ENCODE measurements at regions of chr3 and their contacts with region 1.

Region 1: GRCh38 chr3:151168269-151169094 is 34.5 kb downstream of the GPR171 start:
- DNase-seq: peak; percentile 69 to 75 (median 72)
- H3K4me3 ChIP-seq: no peak overlapping the region
- H3K4me3 Mint-ChIP-seq: no peak overlapping the region
- H3K27ac ChIP-seq: no peak overlapping the region
- H3K27ac Mint-ChIP-seq: peak overlapping the region in 3 of 7 donors; percentile 2 to 76 (median 43)
- H3K4me1 ChIP-seq: peaks cover 34% of the 10 kb centered on the region
- H3K4me1 Mint-ChIP-seq: peaks cover 26 to 39% (median 33%) of the 10 kb centered on the region in 4 donors
- H3K27me3 ChIP-seq: no peaks in the 10 kb centered on the region
- H3K27me3 Mint-ChIP-seq: no peaks in the 10 kb centered on the region

Region 2: GRCh38 chr3:151156618-151157216 is 11.8 kb before region 1 on chr3:
- CTCF ChIA-PET with region 1: interaction called, 20 read pairs
- POLR2A ChIA-PET with region 1: no interaction called
- intact Hi-C with region 1: no loop called
- DNase-seq: peak; percentile 42 to 49 (median 45)
- H3K4me3 ChIP-seq: no peak overlapping the region
- H3K4me3 Mint-ChIP-seq: no peak overlapping the region
- H3K27ac ChIP-seq: no peak overlapping the region
- H3K27ac Mint-ChIP-seq: no peak overlapping the region
- H3K4me1 ChIP-seq: no peaks in the 10 kb centered on the region
- H3K4me1 Mint-ChIP-seq: peaks cover 0 to 2% (median 0%) of the 10 kb centered on the region in 4 donors
- H3K27me3 ChIP-seq: no peaks in the 10 kb centered on the region
- H3K27me3 Mint-ChIP-seq: peaks cover 8% of the 10 kb centered on the region in 2 donors

Region 3: DNA sequence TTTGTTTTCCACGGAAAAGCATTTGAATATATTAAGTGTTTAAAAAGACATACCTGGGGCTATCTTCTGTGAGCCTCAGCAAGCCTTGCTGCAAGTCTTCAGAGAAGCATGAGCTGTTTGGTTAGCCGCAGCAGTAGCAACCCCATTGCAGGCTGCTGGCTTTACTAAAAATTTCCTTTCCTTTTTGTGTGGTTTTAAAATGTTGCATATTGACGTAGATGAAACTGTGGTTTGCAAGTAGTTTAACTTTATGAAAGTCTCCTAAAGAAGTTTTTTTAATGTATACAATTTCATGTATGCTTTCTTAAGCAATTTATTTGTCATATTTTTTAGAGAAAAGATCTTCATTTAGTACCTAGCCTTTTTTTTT is 34.6 kb after region 1 on chr3 and contains the start of gene GPR171:
- CTCF ChIA-PET with region 1: interaction called, 39 read pairs
- POLR2A ChIA-PET with region 1: interaction called, 70 read pairs
- intact Hi-C with region 1: loop called (anchors 1 kb)
- DNase-seq: peak; percentile 80 to 87 (median 82)
- H3K4me3 ChIP-seq: peak within 1 kb of the TSS; percentile 59 to 63
- H3K4me3 Mint-ChIP-seq: peak within 1 kb of the TSS; percentile 73 to 89 (median 86)
- H3K27ac ChIP-seq: peak within 1 kb of the TSS; percentile 75
- H3K27ac Mint-ChIP-seq: peak within 1 kb of the TSS; percentile 87 to 98 (median 97)
- H3K4me1 ChIP-seq: peaks cover 83% of the 10 kb centered on the region
- H3K4me1 Mint-ChIP-seq: peaks cover 45 to 94% (median 59%) of the 10 kb centered on the region in 4 donors
- H3K27me3 ChIP-seq: no peaks in the 10 kb centered on the region
- H3K27me3 Mint-ChIP-seq: no peaks in the 10 kb centered on the region
- total RNA-seq, gene GPR171: 116 to 129 TPM

Region 4: GRCh38 chr3:151227807-151228665 is 59.6 kb after region 1 on chr3:
- CTCF ChIA-PET with region 1: interaction called, 112 read pairs
- POLR2A ChIA-PET with region 1: no interaction called
- intact Hi-C with region 1: loop called (anchors 1 kb)
- DNase-seq: peak; percentile 74 to 78 (median 76)
- H3K4me3 ChIP-seq: no peak overlapping the region
- H3K4me3 Mint-ChIP-seq: peak overlapping the region in 3 of 8 donors; percentile 6 to 63 (median 41)
- H3K27ac ChIP-seq: no peak overlapping the region
- H3K27ac Mint-ChIP-seq: peak overlapping the region in 6 of 7 donors; percentile 2 to 70 (median 49)
- H3K4me1 ChIP-seq: peaks cover 23% of the 10 kb centered on the region
- H3K4me1 Mint-ChIP-seq: peaks cover 26 to 51% (median 35%) of the 10 kb centered on the region in 4 donors
- H3K27me3 ChIP-seq: no peaks in the 10 kb centered on the region
- H3K27me3 Mint-ChIP-seq: no peaks in the 10 kb centered on the region

Region 5: DNA sequence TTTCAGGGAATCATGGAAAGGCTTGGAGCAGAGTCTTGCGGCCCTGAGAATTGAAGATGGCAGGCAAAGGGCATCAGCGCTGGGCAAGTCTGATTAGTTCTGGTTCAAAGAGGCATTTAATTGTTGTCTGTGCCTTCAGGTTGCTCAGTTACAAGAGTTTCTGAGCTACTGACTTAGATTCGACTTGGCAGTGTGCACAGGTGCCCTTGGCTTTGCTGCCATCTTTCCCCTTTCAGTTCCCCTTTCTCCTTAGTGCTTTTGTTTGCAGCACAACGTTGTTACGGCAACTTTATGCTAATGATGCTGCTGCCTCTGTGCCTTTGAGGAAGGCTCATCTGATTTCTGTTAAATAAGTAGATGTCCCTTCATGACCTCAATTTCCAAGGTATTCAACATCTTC is 97.4 kb after region 1 on chr3:
- CTCF ChIA-PET with region 1: interaction called, 19 read pairs
- POLR2A ChIA-PET with region 1: no interaction called
- intact Hi-C with region 1: no loop called
- DNase-seq: no peak
- H3K4me3 ChIP-seq: no peak overlapping the region
- H3K4me3 Mint-ChIP-seq: no peak overlapping the region
- H3K27ac ChIP-seq: no peak overlapping the region
- H3K27ac Mint-ChIP-seq: no peak overlapping the region
- H3K4me1 ChIP-seq: peaks cover 10% of the 10 kb centered on the region
- H3K4me1 Mint-ChIP-seq: peaks cover 10 to 25% (median 13%) of the 10 kb centered on the region in 4 donors
- H3K27me3 ChIP-seq: no peaks in the 10 kb centered on the region
- H3K27me3 Mint-ChIP-seq: peaks cover 0 to 1% of the 10 kb centered on the region in 2 donors

Region 6: GRCh38 chr3:151290673-151291072 is 122.2 kb after region 1 on chr3:
- CTCF ChIA-PET with region 1: interaction called, 88 read pairs
- POLR2A ChIA-PET with region 1: no interaction called
- intact Hi-C with region 1: no loop called
- DNase-seq: no peak
- H3K4me3 ChIP-seq: no peak overlapping the region
- H3K4me3 Mint-ChIP-seq: no peak overlapping the region
- H3K27ac ChIP-seq: no peak overlapping the region
- H3K27ac Mint-ChIP-seq: no peak overlapping the region
- H3K4me1 ChIP-seq: no peaks in the 10 kb centered on the region
- H3K4me1 Mint-ChIP-seq: no peaks in the 10 kb centered on the region
- H3K27me3 ChIP-seq: no peaks in the 10 kb centered on the region
- H3K27me3 Mint-ChIP-seq: peaks cover 2 to 9% of the 10 kb centered on the region in 2 donors

Region 7: GRCh38 chr3:151638555-151639417 is 470.3 kb after region 1 on chr3:
- CTCF ChIA-PET with region 1: no interaction called
- POLR2A ChIA-PET with region 1: no interaction called
- intact Hi-C with region 1: no loop called
- DNase-seq: no peak
- H3K4me3 ChIP-seq: no peak overlapping the region
- H3K4me3 Mint-ChIP-seq: no peak overlapping the region
- H3K27ac ChIP-seq: no peak overlapping the region
- H3K27ac Mint-ChIP-seq: no peak overlapping the region
- H3K4me1 ChIP-seq: no peaks in the 10 kb centered on the region
- H3K4me1 Mint-ChIP-seq: no peaks in the 10 kb centered on the region
- H3K27me3 ChIP-seq: no peaks in the 10 kb centered on the region
- H3K27me3 Mint-ChIP-seq: peaks cover 3 to 7% of the 10 kb centered on the region in 2 donors

Region 8: GRCh38 chr3:151918253-151919029 is 750.0 kb after region 1 on chr3:
- CTCF ChIA-PET with region 1: interaction called, 3 read pairs
- POLR2A ChIA-PET with region 1: no interaction called
- intact Hi-C with region 1: loop called (anchors 5 kb)
- DNase-seq: peak in 4 of 5 donors; percentile 12 to 28 (median 18)
- H3K4me3 ChIP-seq: no peak overlapping the region
- H3K4me3 Mint-ChIP-seq: no peak overlapping the region
- H3K27ac ChIP-seq: no peak overlapping the region
- H3K27ac Mint-ChIP-seq: no peak overlapping the region
- H3K4me1 ChIP-seq: no peaks in the 10 kb centered on the region
- H3K4me1 Mint-ChIP-seq: no peaks in the 10 kb centered on the region
- H3K27me3 ChIP-seq: no peaks in the 10 kb centered on the region
- H3K27me3 Mint-ChIP-seq: peaks cover 0 to 3% of the 10 kb centered on the region in 2 donors

Measured in CD4-positive, alpha-beta memory T cell (primary cell).